Naive thymus-derived CD4-positive, alpha-beta T cell (primary cell): ENCODE measurements at regions of chr12 and their contacts with region 1.

Region 1: DNA sequence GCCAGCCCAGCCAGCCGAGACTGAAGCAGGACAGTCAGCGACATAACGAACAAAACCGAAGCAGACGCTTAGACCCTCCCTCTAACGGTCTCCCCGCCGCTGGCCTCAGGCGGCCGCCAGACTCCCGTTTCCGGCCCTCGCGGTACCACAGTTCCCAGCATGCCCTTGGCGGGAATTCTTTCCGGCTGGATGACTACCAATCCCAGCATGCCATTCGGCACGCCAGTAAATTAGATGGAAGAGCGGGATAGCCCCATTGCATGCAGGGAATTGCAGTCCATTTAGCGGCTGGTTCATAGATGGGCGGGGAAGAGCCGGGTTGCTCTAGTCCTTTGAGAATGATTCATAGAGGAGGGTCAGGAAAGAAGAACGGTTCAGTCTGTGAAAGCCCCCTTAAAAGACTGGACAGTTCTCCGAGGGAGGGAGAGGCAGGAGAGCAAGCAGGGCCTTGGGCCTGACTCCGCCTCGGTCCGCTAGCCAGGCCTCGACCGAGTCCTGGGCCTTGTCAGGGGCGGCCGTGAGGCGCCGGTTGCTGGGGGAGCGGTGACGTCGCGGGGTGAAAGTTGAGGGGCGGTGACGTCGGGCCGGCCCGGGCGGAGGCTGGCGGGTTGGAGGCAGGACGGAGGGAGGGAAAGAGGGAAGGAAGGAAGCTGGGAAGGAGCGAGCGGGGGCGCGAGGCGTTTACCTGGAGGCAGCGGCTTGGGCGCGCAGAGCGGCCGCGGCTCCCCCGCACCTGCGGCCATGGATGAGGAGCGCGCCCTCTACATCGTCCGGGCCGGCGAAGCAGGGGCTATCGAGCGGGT is at the start of gene RIC8B:
- DNase-seq: peak; percentile 63 to 84 (median 70)
- ATAC-seq: peak; percentile 91
- H3K4me3 ChIP-seq: peak within 1 kb of the TSS; percentile 84
- H3K4me3 Mint-ChIP-seq: peak within 1 kb of the TSS; percentile 92 to 100 (median 97)
- H3K27ac ChIP-seq: peak within 1 kb of the TSS; percentile 88
- H3K27ac Mint-ChIP-seq: peak within 1 kb of the TSS; percentile 94 to 99 (median 97)
- H3K4me1 ChIP-seq: peaks cover 0 to 19% of the 10 kb centered on the region in 2 donors
- H3K4me1 Mint-ChIP-seq: peaks cover 22 to 49% (median 39%) of the 10 kb centered on the region in 7 donors
- H3K27me3 ChIP-seq: no peaks in the 10 kb centered on the region
- H3K27me3 Mint-ChIP-seq: peaks cover 0 to 7% (median 0%) of the 10 kb centered on the region in 5 donors
- total RNA-seq, gene RIC8B: 9.8 to 21.1 (median 15.6) TPM

Region 2: DNA sequence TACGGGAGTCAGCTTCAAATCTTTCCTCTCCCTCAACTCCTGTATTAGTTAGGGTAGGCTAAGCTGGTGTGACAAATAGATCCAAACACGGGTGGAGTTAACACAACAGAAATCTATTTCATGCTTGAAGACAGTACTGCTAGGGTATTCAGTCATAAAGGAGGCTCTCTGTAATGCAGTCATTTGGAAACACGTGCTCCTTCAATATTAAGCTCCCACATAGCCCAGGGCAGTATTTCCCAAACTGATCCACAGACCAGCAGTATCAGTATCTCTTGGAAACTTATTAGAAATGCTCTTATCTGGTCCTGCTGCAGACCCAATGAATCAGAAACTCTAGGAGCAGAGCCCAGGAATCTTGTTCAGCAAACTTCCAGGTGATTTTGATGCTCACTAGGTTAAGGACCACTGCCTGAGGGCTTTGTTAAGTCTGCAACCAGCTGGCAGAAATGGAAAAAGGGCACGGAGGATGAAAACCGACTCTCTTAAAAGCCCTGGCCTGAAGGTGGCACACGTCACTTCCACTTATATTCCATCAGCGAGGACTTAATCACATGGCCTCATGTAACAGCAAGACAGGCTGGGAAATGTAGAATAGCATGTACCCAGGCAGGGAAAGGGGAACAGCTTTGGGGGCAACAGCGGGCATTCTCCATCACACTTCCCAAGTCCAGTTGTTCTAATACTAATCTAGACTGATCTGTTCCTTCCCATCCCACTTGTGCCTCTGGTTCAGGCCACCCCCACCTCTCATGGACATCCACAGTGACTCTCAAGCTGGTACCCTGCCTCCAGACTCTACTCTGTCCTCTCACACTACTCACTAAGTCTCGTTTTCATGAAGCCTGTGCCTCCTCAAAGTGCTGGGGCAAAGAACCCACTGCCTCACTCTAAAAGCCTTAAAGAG is 37.9 kb before region 1 on chr12:
- CTCF ChIA-PET with region 1: no interaction called
- POLR2A ChIA-PET with region 1: no interaction called
- intact Hi-C with region 1: loop called in 1 of 2 experiments (anchors 5 kb)
- DNase-seq: peak in 7 of 9 donors; percentile 18 to 41 (median 32)
- ATAC-seq: peak; percentile 67
- H3K4me3 ChIP-seq: no peak overlapping the region
- H3K4me3 Mint-ChIP-seq: no peak overlapping the region
- H3K27ac ChIP-seq: no peak overlapping the region
- H3K27ac Mint-ChIP-seq: peak overlapping the region in 1 of 9 donors; percentile 4
- H3K4me1 ChIP-seq: no peaks in the 10 kb centered on the region
- H3K4me1 Mint-ChIP-seq: peaks cover 0 to 8% (median 5%) of the 10 kb centered on the region in 7 donors
- H3K27me3 ChIP-seq: no peaks in the 10 kb centered on the region
- H3K27me3 Mint-ChIP-seq: peaks cover 0 to 18% (median 0%) of the 10 kb centered on the region in 5 donors

Region 3: DNA sequence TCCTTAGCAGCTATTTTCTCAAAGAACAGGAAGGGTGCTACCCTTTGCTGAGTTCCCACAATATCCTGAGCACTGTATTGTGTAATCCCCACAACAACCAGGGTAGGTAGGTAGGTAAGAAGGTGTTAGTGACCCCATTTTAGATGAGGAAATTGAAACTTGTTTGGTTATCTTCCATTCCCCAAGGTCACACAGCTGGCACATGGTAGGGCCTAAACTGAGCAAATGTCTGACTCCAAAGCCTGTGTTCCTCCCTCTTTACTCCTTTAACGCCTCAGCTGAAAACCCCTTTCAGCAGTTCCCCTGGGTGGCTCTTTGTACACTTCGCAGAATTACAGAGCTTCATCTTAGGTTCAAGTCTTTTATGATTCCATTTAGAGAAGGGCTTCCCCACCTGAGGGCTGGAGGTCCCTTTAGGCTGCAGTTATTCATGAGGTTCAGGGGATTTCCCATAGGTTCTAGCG is 26.2 kb before region 1 on chr12:
- CTCF ChIA-PET with region 1: no interaction called
- POLR2A ChIA-PET with region 1: interaction called, 6 read pairs
- intact Hi-C with region 1: loop called (anchors 1 kb)
- DNase-seq: peak in 7 of 9 donors; percentile 46 to 84 (median 77)
- ATAC-seq: peak; percentile 94
- H3K4me3 ChIP-seq: no peak overlapping the region
- H3K4me3 Mint-ChIP-seq: peak overlapping the region; percentile 26 to 82 (median 50)
- H3K27ac ChIP-seq: peak overlapping the region; percentile 68
- H3K27ac Mint-ChIP-seq: peak overlapping the region; percentile 82 to 98 (median 93)
- H3K4me1 ChIP-seq: peaks cover 19 to 31% of the 10 kb centered on the region in 2 donors
- H3K4me1 Mint-ChIP-seq: peaks cover 20 to 37% (median 26%) of the 10 kb centered on the region in 7 donors
- H3K27me3 ChIP-seq: no peaks in the 10 kb centered on the region
- H3K27me3 Mint-ChIP-seq: peaks cover 0 to 19% (median 5%) of the 10 kb centered on the region in 5 donors

Region 4: DNA sequence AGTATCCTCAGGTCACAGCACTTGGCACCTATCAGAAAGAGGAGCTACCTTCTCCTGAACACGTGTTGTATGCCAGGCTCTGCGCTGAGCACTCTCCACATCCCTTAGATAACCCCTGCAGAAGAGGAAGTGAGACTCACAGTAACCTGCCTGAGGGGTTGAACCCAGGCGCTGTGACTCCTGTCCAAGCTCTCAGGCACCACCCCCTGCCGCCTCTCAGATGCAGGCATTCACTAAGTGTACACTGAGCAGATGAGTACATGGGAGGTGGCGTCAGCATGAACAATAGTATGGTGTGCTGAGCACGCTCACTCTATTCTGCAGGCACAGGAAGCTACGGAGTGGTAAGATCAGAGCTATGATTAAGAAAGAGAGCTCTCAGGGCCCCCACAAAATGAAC is 20.7 kb before region 1 on chr12:
- CTCF ChIA-PET with region 1: no interaction called
- POLR2A ChIA-PET with region 1: interaction called, 6 read pairs
- intact Hi-C with region 1: loop called (anchors 1 kb)
- DNase-seq: peak in 7 of 9 donors; percentile 31 to 57 (median 43)
- ATAC-seq: peak; percentile 85
- H3K4me3 ChIP-seq: peak overlapping the region; percentile 7
- H3K4me3 Mint-ChIP-seq: peak overlapping the region; percentile 35 to 75 (median 54)
- H3K27ac ChIP-seq: no peak overlapping the region
- H3K27ac Mint-ChIP-seq: peak overlapping the region; percentile 53 to 89 (median 68)
- H3K4me1 ChIP-seq: peaks cover 23 to 27% of the 10 kb centered on the region in 2 donors
- H3K4me1 Mint-ChIP-seq: peaks cover 19 to 39% (median 24%) of the 10 kb centered on the region in 7 donors
- H3K27me3 ChIP-seq: no peaks in the 10 kb centered on the region
- H3K27me3 Mint-ChIP-seq: no peaks in the 10 kb centered on the region

Region 5: GRCh38 chr12:106760184-106760531 is 14.0 kb before region 1 on chr12:
- CTCF ChIA-PET with region 1: interaction called, 3 read pairs
- POLR2A ChIA-PET with region 1: interaction called, 4 read pairs
- intact Hi-C with region 1: loop called (anchors 1 to 2 kb)
- DNase-seq: peak in 7 of 9 donors; percentile 35 to 50 (median 45)
- ATAC-seq: peak; percentile 91
- H3K4me3 ChIP-seq: peak overlapping the region; percentile 8
- H3K4me3 Mint-ChIP-seq: peak overlapping the region; percentile 62 to 87 (median 80)
- H3K27ac ChIP-seq: peak overlapping the region; percentile 65
- H3K27ac Mint-ChIP-seq: peak overlapping the region; percentile 81 to 98 (median 93)
- H3K4me1 ChIP-seq: peaks cover 15 to 22% of the 10 kb centered on the region in 2 donors
- H3K4me1 Mint-ChIP-seq: peaks cover 9 to 33% (median 25%) of the 10 kb centered on the region in 7 donors
- H3K27me3 ChIP-seq: no peaks in the 10 kb centered on the region
- H3K27me3 Mint-ChIP-seq: no peaks in the 10 kb centered on the region

Region 6: GRCh38 chr12:106986625-106987430 is 212.6 kb after region 1 on chr12 and contains the start of gene MTERF2:
- CTCF ChIA-PET with region 1: no interaction called
- POLR2A ChIA-PET with region 1: no interaction called
- intact Hi-C with region 1: loop called in 1 of 2 experiments (anchors 1 kb)
- DNase-seq: peak; percentile 52 to 78 (median 67)
- ATAC-seq: peak; percentile 99
- H3K4me3 ChIP-seq: peak within 1 kb of the TSS; percentile 88
- H3K4me3 Mint-ChIP-seq: peak within 1 kb of the TSS; percentile 91 to 97 (median 96)
- H3K27ac ChIP-seq: peak within 1 kb of the TSS; percentile 77
- H3K27ac Mint-ChIP-seq: peak within 1 kb of the TSS; percentile 79 to 92 (median 85)
- H3K4me1 ChIP-seq: peaks cover 12 to 14% of the 10 kb centered on the region in 2 donors
- H3K4me1 Mint-ChIP-seq: peaks cover 29 to 45% (median 41%) of the 10 kb centered on the region in 7 donors
- H3K27me3 ChIP-seq: no peaks in the 10 kb centered on the region
- H3K27me3 Mint-ChIP-seq: peaks cover 0 to 2% (median 0%) of the 10 kb centered on the region in 5 donors
- total RNA-seq, gene MTERF2: 7.1 to 12.9 (median 9.7) TPM

Region 7: DNA sequence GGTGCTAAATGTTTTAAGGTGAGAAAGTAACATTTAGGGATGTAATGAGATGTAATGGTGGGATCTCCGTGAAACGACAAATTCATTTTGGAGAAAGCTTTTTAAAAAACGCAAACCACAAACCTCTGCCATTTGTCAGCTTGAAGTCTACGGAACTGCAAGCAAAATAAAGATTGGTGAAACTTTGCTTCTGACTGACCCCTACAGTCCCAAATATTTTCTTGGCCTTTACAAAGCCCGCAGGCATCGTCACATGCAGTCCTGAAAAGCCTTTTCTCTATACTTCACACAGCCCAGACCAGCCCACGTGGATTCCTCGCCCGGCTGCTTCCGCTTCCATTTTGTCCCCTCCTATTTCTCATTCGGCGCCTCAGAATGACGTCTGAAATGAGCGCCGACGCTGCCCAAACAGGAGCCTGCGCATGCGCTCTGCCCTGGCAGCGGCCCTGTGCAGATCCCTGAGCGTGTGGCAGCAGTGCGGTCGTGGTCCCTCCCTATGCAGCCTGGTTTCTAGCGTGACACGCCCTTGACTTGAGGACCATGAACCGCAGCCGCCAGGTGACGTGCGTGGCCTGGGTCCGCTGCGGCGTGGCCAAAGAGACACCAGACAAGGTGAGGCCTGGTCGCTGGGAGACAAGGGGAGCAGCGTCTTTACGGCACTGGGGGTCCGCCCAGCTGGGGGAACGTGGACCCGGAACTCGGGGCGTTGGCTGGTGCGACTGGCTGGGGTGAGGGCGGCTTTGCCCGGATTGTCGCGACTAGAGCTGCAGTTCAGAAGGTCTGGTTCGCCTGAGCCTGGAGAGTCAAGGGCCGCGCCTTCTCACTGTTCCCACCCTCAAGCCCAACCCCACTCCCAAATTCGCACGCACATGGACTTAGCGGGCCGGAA is 911.4 kb after region 1 on chr12 and contains the start of gene PWP1:
- CTCF ChIA-PET with region 1: no interaction called
- POLR2A ChIA-PET with region 1: no interaction called
- intact Hi-C with region 1: loop called in 1 of 2 experiments (anchors 2 kb)
- DNase-seq: peak; percentile 93 to 97 (median 95)
- ATAC-seq: peak; percentile 93
- H3K4me3 ChIP-seq: peak within 1 kb of the TSS; percentile 78
- H3K4me3 Mint-ChIP-seq: peak within 1 kb of the TSS; percentile 90 to 99 (median 95)
- H3K27ac ChIP-seq: peak within 1 kb of the TSS; percentile 88
- H3K27ac Mint-ChIP-seq: peak within 1 kb of the TSS; percentile 90 to 99 (median 97)
- H3K4me1 ChIP-seq: peaks cover 12 to 19% of the 10 kb centered on the region in 2 donors
- H3K4me1 Mint-ChIP-seq: peaks cover 23 to 40% (median 35%) of the 10 kb centered on the region in 7 donors
- H3K27me3 ChIP-seq: no peaks in the 10 kb centered on the region
- H3K27me3 Mint-ChIP-seq: peaks cover 0 to 3% (median 0%) of the 10 kb centered on the region in 5 donors
- total RNA-seq, gene PWP1: 20.9 to 42.5 (median 25.7) TPM